ENCODE measurements at regions of chr1 and their contacts with region 1.

Region 1: DNA sequence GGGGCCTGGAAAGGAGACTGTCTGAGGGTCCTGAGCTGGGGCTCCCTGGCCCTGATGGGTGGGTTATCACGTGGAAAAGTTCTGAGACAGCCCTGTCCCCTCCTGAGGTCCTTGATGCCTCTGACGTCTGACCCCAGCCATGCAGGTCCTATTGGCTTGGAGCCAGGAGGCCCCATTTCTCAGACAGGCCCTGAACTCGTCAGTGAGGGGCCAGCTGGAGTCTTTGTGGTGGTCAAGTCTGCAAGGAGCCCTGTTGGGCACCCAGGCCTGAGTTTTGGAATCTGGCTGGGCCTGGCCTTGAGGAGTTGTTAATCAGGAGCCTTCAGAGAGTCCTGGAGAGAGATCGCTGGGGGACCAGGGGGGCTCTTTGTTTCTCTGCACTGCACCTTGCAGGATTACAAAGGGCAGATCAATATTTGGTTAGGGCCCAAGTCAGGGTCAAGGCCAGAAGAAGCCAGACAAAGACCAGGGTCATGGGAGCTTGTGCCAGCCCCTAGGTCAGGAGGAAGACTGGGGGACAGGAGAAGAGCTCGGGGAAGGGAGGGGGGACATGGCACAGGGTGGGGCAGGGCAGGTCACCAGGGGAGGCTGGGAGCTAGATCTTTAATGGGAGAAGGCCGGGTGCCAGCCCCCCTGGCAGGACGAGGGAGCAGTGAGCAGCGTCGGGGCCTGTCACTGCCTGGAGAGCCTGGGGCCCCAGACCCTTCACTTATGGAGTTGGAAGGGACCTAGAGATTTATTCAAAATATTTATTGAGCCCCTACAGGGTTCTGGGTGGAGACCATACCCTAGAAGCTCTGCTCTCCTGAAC is 83.2 kb downstream of the PTPRU start:
- DNase-seq: no peak
- H3K4me3 Mint-ChIP-seq: no peak overlapping the region
- H3K27ac Mint-ChIP-seq: no peak overlapping the region
- H3K4me1 Mint-ChIP-seq: peaks cover 2% of the 10 kb centered on the region
- H3K27me3 Mint-ChIP-seq: no peaks in the 10 kb centered on the region
- CTCF ChIP-seq: no peak

Region 2: DNA sequence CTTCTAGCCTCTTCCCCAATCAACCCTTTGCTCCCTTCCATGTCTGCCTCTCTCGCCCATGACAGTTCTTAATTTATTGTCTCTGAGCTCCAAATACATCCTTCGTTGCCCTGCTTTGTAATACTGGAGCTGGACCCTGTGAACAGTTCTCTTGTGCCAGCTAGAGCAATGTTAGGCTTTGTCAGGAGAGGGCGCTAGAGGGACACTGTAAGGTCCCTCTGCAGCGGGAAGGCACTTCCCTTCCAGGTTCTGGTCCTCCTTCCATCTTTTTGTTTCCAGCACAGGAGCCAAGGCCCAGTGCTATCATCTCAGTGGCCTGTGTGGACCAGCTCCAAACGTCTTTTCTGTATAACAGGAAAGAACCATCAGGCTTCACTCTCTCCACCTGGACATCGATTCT is 12.7 kb after region 1 on chr1:
- CTCF ChIA-PET with region 1: interaction called, 10 read pairs
- POLR2A ChIA-PET with region 1: interaction called, 3 read pairs
- intact Hi-C with region 1: no loop called
- DNase-seq: peak; percentile 56
- H3K4me3 Mint-ChIP-seq: no peak overlapping the region
- H3K27ac Mint-ChIP-seq: no peak overlapping the region
- H3K4me1 Mint-ChIP-seq: no peaks in the 10 kb centered on the region
- H3K27me3 Mint-ChIP-seq: peaks cover 10% of the 10 kb centered on the region
- CTCF ChIP-seq: peak; percentile 27

Measured in MCF 10A (cell line).